IMR-90 (cell line): ENCODE measurements at regions of chr6 and their contacts with region 1.

Region 1: GRCh38 chr6:41318654-41319565 is 16.5 kb upstream of the NCR2 start:
- DNase-seq: peak; percentile 81
- ATAC-seq: peak; percentile 98
- H3K4me3 ChIP-seq: peak overlapping the region; percentile 37; the same call in 1 of the 2 replicates
- H3K27ac ChIP-seq: no peak overlapping the region
- H3K4me1 ChIP-seq: no peaks in the 10 kb centered on the region
- H3K27me3 ChIP-seq: peaks cover 13% of the 10 kb centered on the region
- CTCF ChIP-seq: peak; percentile 98
- POLR2A ChIP-seq: 0 out of 2 replicates have a peak, but pooled peaks have one; percentile 26
- RAD21 ChIP-seq: peak; percentile 87

Region 2: GRCh38 chr6:39593644-39594043 is 1725.3 kb before region 1 on chr6:
- CTCF ChIA-PET with region 1: no interaction called
- POLR2A ChIA-PET with region 1: no interaction called
- dilution Hi-C with region 1: no loop called
- in situ Hi-C with region 1: no loop called
- intact Hi-C with region 1: no loop called
- DNase-seq: no peak
- ATAC-seq: no peak
- H3K4me3 ChIP-seq: no peak overlapping the region
- H3K27ac ChIP-seq: no peak overlapping the region
- H3K4me1 ChIP-seq: no peaks in the 10 kb centered on the region
- H3K27me3 ChIP-seq: no peaks in the 10 kb centered on the region
- CTCF ChIP-seq: no peak
- POLR2A ChIP-seq: no peak
- RAD21 ChIP-seq: no peak

Region 3: GRCh38 chr6:41072676-41073623 is 246.0 kb before region 1 on chr6 and contains the start of gene NFYA:
- CTCF ChIA-PET with region 1: no interaction called
- POLR2A ChIA-PET with region 1: no interaction called
- dilution Hi-C with region 1: no loop called
- in situ Hi-C with region 1: no loop called
- intact Hi-C with region 1: loop called (anchors 5 kb)
- DNase-seq: peak; percentile 99
- ATAC-seq: peak; percentile 76
- H3K4me3 ChIP-seq: peak within 1 kb of the TSS; percentile 72
- H3K27ac ChIP-seq: peak within 1 kb of the TSS; percentile 93
- H3K4me1 ChIP-seq: peaks cover 3% of the 10 kb centered on the region
- H3K27me3 ChIP-seq: no peaks in the 10 kb centered on the region
- CTCF ChIP-seq: peak; percentile 60
- POLR2A ChIP-seq: peak; percentile 88
- RAD21 ChIP-seq: peak; percentile 35; the same call in 1 of the 2 replicates
- total RNA-seq, gene NFYA: 21.9 and 28.5 TPM in 2 replicates

Region 4: GRCh38 chr6:41092421-41093140 is 226.3 kb before region 1 on chr6:
- CTCF ChIA-PET with region 1: no interaction called
- POLR2A ChIA-PET with region 1: no interaction called
- dilution Hi-C with region 1: no loop called
- in situ Hi-C with region 1: loop called (anchors 5 kb)
- intact Hi-C with region 1: loop called (anchors 1 kb)
- DNase-seq: peak; percentile 37
- ATAC-seq: peak; percentile 69
- H3K4me3 ChIP-seq: no peak overlapping the region
- H3K27ac ChIP-seq: no peak overlapping the region
- H3K4me1 ChIP-seq: peaks cover 5% of the 10 kb centered on the region
- H3K27me3 ChIP-seq: no peaks in the 10 kb centered on the region
- CTCF ChIP-seq: peak; percentile 47
- POLR2A ChIP-seq: no peak
- RAD21 ChIP-seq: peak; percentile 44; the same call in 1 of the 2 replicates

Region 5: GRCh38 chr6:41306187-41306854 is 12.6 kb before region 1 on chr6:
- CTCF ChIA-PET with region 1: interaction called, 7 read pairs
- POLR2A ChIA-PET with region 1: no interaction called
- dilution Hi-C with region 1: no loop called
- in situ Hi-C with region 1: no loop called
- intact Hi-C with region 1: loop called (anchors 1 kb)
- DNase-seq: peak; percentile 49
- ATAC-seq: no peak
- H3K4me3 ChIP-seq: no peak overlapping the region
- H3K27ac ChIP-seq: no peak overlapping the region
- H3K4me1 ChIP-seq: no peaks in the 10 kb centered on the region
- H3K27me3 ChIP-seq: peaks cover 19% of the 10 kb centered on the region
- CTCF ChIP-seq: peak; percentile 59
- POLR2A ChIP-seq: no peak
- RAD21 ChIP-seq: peak; percentile 38; the same call in 1 of the 2 replicates